GM10248 (cell line): ENCODE measurements at regions of chr2 and their contacts with region 1.

Region 1: GRCh38 chr2:3461801-3462492 is 57.4 kb downstream of the ADI1 start:
- DNase-seq: peak; percentile 77
- CTCF ChIP-seq: peak; percentile 82

Region 2: DNA sequence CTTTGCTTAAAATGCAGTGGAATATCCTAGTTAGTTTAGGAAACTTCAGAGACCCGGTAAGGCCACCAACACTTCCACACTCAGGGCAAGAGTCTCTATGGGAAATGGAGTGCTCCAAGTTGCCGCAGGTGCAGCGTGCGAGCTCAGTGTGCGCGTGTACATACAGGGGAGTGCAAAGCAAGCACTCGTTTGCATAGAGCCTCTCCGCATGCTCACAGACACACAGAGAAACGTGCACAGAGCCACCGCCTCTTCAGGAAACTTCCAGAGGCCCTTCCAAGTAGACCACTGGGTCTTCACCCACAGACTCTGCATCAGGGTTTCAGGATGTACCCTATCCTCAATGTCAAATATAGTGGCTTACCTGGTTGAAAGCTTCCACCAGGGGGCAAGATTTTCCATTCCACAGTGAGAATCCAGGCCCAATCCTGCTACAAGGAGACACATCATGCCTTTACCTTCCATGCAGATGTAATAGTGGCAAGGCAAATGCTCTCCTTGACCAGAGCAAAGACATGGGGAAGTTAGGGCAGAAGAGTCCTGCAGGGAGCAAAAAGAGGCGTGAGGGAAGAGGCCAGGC is 617.9 kb before region 1 on chr2:
- CTCF ChIA-PET with region 1: interaction called, 14 read pairs
- POLR2A ChIA-PET with region 1: no interaction called
- DNase-seq: no peak
- CTCF ChIP-seq: no peak

Region 3: DNA sequence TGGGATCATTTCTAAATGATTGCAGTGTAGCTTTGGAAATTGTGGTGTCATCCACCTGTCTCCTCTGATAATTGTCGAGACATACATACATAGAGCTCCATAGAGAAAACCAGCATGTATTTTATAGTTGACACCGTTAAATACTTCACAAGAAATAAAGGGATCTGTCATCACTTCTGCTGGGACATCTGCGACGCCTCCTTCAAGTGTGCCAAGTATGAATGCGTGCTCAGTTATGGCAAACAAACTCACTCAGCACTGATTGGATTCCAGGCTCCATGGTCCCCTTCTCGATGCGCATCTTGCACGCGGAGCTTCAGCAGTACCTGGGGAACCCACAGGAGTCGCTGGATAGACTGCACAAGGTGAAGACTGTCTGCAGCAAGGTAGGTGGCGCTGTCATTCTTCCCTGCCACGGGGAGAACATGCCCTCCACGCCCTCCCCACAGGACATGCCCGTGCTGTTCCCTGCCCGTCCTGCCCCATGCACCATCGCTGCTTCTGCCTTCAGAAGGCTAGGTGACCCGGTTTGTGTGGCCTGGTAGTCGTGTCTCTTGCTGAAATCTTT is 18.4 kb before region 1 on chr2:
- CTCF ChIA-PET with region 1: interaction called, 21 read pairs
- POLR2A ChIA-PET with region 1: no interaction called
- DNase-seq: no peak
- CTCF ChIP-seq: no peak

Region 4: DNA sequence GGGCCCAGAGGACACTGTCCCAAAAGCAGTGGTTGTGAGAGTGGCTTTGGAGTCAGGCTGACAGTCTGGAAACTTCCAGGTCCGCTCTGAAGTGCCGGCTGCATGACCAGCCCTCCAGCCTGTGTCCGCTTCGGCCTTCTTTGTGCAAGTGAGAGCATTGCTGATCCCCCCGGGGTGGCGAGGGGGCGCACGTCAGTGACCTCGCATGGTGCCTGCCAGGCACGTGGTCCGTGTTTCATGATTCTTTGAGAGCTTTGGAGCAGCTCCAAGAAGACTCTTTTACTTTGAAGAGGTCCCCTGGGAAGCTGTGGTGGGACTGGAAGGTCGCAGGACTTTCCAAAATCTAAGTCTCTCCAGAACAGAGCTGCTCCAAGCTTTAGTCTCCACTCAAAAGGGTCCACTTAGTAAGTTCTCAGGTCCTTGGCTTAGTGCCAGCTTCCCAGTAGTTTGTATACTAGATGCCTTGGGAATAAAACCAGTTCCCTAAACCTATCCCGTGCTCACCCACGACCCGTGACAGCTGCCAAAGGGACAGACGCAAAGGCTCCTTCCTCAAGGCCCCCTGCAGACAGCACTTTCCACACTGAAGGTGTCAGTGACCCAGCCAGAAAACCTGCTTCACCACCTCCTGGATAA is 11.5 kb before region 1 on chr2:
- CTCF ChIA-PET with region 1: interaction called, 42 read pairs
- POLR2A ChIA-PET with region 1: no interaction called
- DNase-seq: no peak
- CTCF ChIP-seq: no peak

Region 5: GRCh38 chr2:3472966-3473365 is 11.0 kb after region 1 on chr2:
- CTCF ChIA-PET with region 1: interaction called, 50 read pairs
- POLR2A ChIA-PET with region 1: no interaction called
- DNase-seq: no peak
- CTCF ChIP-seq: no peak

Region 6: DNA sequence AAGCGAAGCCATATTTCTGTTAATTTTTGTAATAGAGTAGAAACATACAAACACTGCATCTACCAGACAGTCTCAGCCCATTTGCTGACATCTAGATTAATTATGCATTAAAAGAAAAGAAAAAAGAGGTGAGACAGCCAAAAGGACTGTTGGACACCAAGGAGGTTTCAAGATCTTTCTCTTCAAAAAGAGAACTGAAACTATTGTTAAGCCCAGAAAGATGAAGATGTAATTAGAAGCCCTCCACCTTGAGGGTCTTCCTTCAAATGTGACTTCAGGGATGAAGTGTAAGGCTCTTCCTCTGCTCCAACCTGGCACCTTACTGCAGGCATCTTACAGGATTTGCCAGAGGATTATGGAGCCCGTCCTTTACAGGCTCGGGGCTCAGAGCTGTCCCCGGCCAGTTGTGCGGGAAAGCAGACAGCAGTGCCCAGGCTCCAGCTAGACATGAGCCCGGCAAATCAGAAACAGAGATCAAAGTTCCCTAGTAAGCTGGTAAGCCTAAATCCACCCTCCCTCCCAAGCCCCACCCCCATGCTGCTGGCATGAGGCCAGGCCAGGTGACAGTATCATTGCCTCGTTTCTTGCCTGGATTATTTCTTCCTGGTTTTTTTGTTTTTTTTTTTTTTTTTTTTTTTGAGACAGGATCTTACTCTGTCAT is 18.5 kb after region 1 on chr2:
- CTCF ChIA-PET with region 1: interaction called, 49 read pairs
- POLR2A ChIA-PET with region 1: no interaction called
- DNase-seq: no peak
- CTCF ChIP-seq: no peak

Region 7: DNA sequence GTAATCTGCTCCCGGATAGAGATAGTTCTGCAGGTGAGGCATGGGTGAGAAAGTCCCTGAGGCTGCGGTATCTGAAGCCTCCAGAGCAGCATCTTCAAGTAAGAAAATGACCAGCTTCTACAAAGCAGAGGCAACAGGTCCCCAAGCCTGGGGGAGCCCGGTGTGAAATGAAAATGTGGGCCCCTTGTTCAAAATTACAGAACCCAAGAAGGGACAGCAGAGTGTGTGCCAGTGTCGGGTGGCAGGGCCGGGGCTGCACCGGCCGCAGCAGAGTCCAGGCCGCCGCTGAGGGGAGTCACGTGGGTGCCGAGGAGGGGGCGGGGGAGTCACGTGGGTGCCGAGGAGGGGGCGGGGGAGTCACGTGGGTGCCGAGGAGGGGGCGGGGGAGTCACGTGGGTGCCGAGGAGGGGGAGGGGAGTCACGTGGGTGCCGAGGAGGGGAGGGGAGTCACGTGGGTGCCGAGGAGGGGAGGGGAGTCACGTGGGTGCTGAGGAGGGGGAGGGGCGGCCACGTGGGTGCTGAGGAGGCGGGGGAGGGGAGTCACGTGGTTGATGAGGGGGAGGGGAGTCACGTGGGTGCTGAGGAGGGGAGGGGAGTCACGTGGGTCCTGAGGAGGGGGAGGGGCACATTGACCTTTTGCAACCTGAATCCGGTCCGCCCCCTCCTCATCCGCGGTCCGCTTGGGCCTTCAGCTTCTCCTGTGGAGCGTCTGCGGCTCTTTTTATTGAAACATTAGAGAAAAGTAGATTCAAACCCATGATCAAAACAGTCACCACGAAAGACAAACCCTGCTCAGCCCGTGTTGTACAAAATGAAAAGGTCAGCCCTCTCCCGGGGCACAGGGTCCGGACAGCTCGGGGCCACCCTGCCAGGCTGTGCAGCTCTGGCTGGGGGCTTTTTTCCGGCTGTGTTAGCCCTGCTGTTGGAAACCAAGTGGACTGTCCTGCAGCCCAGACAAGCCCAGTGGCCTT is 143.3 kb after region 1 on chr2:
- CTCF ChIA-PET with region 1: no interaction called
- POLR2A ChIA-PET with region 1: no interaction called
- DNase-seq: peak; percentile 73
- CTCF ChIP-seq: no peak